Ascending aorta (tissue), 2 donors: ENCODE measurements at regions of chr1 and their contacts with region 1.

Region 1: GRCh38 chr1:64744492-64745180 is at the start of gene RAVER2:
- DNase-seq: peak; percentile 16 to 85
- H3K4me3 ChIP-seq: peak within 1 kb of the TSS; percentile 84 to 87
- H3K27ac ChIP-seq: peak within 1 kb of the TSS; percentile 86 to 90
- H3K4me1 ChIP-seq: peaks cover 0 to 20% of the 10 kb centered on the region in 2 donors
- H3K27me3 ChIP-seq: no peaks in the 10 kb centered on the region
- CTCF ChIP-seq: peak in 2 of 3 experiments; percentile 32 to 60
- total RNA-seq, gene RAVER2: 17.7 TPM

Region 2: DNA sequence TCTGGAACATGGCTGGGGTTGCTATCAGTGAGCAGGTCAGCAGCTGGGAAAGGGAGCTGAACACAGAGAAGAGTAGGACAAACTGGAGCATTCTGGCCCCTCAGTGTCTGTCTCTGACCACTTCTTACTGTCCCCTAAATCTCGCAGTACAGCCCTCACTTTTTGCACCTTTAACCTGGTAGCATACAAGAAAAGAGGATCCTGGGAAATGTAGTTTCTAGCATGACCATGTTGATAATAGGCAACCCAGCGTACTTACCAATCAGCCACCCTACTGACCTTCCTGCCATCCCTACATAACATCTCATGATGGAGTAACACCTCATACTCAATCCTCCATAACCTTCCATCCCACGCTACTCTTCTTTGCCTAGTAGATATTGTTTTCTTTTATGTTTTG is 98.9 kb before region 1 on chr1:
- intact Hi-C with region 1: no loop called
- DNase-seq: no peak
- H3K4me3 ChIP-seq: no peak overlapping the region
- H3K27ac ChIP-seq: no peak overlapping the region
- H3K4me1 ChIP-seq: no peaks in the 10 kb centered on the region
- H3K27me3 ChIP-seq: no peaks in the 10 kb centered on the region
- CTCF ChIP-seq: no peak

Region 3: DNA sequence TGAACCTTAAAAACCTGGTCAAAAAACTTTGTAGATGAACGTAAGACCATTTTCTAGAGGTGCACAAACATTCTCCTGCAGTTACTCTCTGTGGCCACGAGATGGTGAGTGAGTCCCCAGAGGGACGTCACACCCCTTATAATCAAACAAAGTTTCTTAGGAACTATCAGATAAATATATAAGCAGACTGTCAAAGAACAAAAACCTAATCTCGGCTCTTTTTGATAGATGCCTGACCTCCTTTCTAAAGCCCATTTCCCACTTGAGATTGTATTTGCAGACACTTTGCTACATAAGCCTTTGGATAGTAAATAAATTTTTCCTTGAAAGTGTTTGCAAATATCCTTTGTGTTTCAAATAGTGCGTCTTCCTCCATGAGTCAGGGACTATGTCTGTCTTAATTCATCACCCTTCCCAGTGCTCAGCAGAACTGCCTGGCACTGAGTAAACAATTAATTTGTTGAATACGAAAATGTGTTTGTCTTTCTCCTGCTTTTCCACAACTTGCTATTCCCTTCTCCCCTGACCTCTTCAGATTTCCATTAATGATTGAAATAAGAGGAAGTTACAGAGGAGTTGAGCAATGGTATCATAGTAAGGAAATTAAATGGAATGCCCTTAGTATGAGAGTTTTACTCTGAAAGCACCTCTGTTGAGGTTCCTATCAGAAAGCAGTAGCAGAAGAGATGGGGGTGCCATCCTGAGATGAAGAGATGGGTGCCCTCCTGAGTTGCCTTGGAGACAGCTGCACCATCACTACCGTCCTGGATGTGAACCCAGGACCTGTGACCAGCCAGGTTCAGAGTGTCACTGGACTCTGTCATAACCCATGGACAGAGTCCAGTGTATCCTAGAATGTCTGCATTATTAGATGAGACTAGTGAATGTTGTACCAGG is 57.6 kb before region 1 on chr1:
- intact Hi-C with region 1: loop called (anchors 2 kb)
- DNase-seq: no peak
- H3K4me3 ChIP-seq: no peak overlapping the region
- H3K27ac ChIP-seq: peak overlapping the region; percentile 25 to 37
- H3K4me1 ChIP-seq: peaks cover 0 to 2% of the 10 kb centered on the region in 2 donors
- H3K27me3 ChIP-seq: no peaks in the 10 kb centered on the region
- CTCF ChIP-seq: peak; percentile 66 to 90 (median 82)

Region 4: DNA sequence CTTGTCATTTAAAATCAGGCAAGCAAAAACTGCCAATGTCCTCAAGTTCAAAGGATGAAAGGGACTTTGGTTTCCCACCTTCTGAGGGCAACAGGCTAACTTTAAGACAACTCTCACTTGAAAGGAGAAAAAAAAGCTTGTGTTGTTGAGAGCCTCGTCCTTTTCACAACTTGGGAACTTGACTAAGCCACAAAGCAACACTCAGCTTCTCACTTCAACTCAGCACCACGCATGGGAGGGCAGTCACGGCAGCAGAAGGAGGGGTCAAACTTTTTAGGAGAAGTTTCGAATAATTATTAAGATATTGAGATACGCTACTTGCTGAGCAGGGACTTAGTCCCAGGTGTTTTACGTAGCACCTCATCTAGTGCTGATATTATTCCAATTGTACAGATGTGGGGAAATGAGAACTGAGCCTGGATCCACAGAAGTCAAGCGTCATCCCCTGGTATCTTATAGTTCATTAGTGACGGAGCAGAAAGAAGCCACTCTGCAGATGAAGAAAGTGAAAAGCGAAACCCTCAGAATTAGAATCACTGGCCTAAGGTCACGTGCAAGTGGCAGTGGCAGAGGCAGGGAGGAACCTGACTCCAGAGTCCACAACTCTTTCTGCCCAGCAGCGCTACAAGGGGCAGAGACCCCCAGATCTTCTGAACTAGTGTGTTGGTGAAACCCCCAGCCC is 138.1 kb after region 1 on chr1:
- intact Hi-C with region 1: no loop called
- DNase-seq: no peak
- H3K4me3 ChIP-seq: no peak overlapping the region
- H3K27ac ChIP-seq: no peak overlapping the region
- H3K4me1 ChIP-seq: no peaks in the 10 kb centered on the region
- H3K27me3 ChIP-seq: no peaks in the 10 kb centered on the region
- CTCF ChIP-seq: no peak

Region 5: GRCh38 chr1:64906447-64906846 is 161.8 kb after region 1 on chr1:
- intact Hi-C with region 1: no loop called
- DNase-seq: no peak
- H3K4me3 ChIP-seq: no peak overlapping the region
- H3K27ac ChIP-seq: no peak overlapping the region
- H3K4me1 ChIP-seq: peaks cover 0 to under 1% of the 10 kb centered on the region in 2 donors
- H3K27me3 ChIP-seq: no peaks in the 10 kb centered on the region
- CTCF ChIP-seq: no peak

Region 6: DNA sequence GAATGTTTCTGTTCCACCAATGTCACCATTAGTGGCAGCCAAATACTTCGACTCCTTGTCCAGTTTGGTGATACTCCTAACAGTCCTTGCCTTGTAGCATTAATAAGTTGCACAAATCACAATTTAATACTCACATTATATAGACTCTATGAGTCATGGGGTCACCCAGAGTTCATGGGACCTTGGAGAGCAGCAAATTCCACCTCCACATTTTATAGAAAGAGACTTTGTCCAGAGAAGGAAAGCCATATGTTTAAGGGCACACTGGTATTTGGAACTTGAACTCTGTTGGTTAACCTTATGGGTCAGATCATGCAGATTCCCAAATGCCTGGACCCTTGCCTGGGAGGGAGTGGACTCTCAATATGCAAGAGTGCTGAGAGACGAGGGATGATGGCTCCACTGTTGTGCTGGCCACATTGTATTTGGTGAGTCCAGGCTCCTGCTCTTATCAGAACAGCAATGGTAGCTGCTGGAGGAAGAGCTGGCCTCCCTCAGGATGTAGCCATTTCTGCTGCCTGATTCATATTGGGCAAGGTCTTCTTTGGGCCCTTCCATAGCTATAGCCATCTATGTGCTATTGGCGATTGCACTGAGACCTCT is 595.3 kb after region 1 on chr1:
- intact Hi-C with region 1: no loop called
- DNase-seq: no peak
- H3K4me3 ChIP-seq: no peak overlapping the region
- H3K27ac ChIP-seq: no peak overlapping the region
- H3K4me1 ChIP-seq: no peaks in the 10 kb centered on the region
- H3K27me3 ChIP-seq: no peaks in the 10 kb centered on the region
- CTCF ChIP-seq: no peak